ENCODE measurements at regions of chr11 and their contacts with region 1.

Region 1: GRCh38 chr11:61967116-61967923 is at the start of gene FTH1:
- DNase-seq: peak; percentile 78
- ATAC-seq: peak; percentile 59
- H3K4me3 ChIP-seq: peak within 1 kb of the TSS; percentile 92 to 99 (median 96)
- H3K27ac ChIP-seq: peak within 1 kb of the TSS; percentile 99
- H3K4me1 ChIP-seq: peaks cover 71% of the 10 kb centered on the region
- H3K27me3 ChIP-seq: no peaks in the 10 kb centered on the region; a peak in 1 of 5 replicates
- CTCF ChIP-seq: peak; percentile 6; the same call in 1 of the 2 replicates
- EP300 ChIP-seq: no peak; a peak in 1 of 4 replicates
- POLR2A ChIP-seq: peak; percentile 90 to 95
- RAD21 ChIP-seq: 0 out of 2 replicates have a peak, but pooled peaks have one; percentile 59
- total RNA-seq, gene FTH1: 544 and 607 TPM in 2 replicates

Region 2: DNA sequence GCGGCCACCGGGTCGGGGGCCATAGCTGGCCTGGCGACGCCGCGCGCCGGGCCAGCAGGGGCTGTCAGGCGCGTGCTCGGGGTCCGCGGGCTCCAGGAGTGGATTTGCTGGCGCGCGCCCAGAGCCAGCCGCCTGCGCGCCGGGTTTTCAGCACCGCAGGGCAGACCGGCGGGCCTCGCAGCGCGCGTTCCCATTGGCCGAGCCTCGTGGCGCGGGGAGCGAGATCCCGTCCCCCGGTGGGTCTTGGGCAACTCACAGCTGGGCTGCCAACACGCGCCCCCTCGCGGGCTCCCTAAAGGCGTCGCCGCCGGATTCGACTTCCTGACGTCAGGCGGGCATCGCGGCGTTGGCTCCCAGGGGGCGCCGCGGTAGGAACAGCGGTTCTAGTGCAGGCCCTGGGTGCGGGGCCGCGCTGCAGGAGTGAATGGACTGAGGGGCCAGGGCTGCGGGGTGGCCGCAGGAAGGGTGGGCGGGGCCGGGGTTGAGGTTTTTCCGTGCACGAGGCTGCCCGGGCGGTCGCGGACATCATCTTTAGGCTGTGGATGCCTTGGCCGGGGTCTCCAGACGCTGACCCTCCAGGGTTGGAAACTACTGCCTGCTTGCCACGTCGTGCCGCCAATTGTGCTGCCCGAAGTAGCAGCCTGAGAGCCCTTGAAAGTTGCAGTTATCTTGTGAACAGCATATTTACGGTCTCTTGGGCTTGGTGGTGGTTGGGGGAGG is 150.4 kb before region 1 on chr11 and contains the start of gene FADS1:
- CTCF ChIA-PET with region 1: no interaction called
- POLR2A ChIA-PET with region 1: interaction called, 24 read pairs
- in situ Hi-C with region 1: no loop called
- intact Hi-C with region 1: no loop called
- DNase-seq: peak; percentile 95
- ATAC-seq: peak; percentile 71
- H3K4me3 ChIP-seq: peak within 1 kb of the TSS; percentile 74 to 94 (median 81)
- H3K27ac ChIP-seq: peak within 1 kb of the TSS; percentile 99
- H3K4me1 ChIP-seq: peaks cover 52% of the 10 kb centered on the region
- H3K27me3 ChIP-seq: no peaks in the 10 kb centered on the region; a peak in 1 of 5 replicates
- CTCF ChIP-seq: peak; percentile 95
- EP300 ChIP-seq: 0 out of 4 replicates have a peak, but pooled peaks of 1 of the 2 experiments have one; percentile 10
- POLR2A ChIP-seq: no peak
- RAD21 ChIP-seq: peak; percentile 74; the same call in 1 of the 2 replicates
- total RNA-seq, gene FADS1: 65.8 and 108 TPM in 2 replicates

Region 3: GRCh38 chr11:61947486-61948210 is 19.7 kb before region 1 on chr11:
- CTCF ChIA-PET with region 1: no interaction called
- POLR2A ChIA-PET with region 1: interaction called, 138 read pairs
- in situ Hi-C with region 1: no loop called
- intact Hi-C with region 1: no loop called
- DNase-seq: peak; percentile 73
- ATAC-seq: peak; percentile 85
- H3K4me3 ChIP-seq: no peak overlapping the region
- H3K27ac ChIP-seq: no peak overlapping the region
- H3K4me1 ChIP-seq: peaks cover 21% of the 10 kb centered on the region; the same call in 1 of the 2 replicates
- H3K27me3 ChIP-seq: peaks cover 1 to 19% of the 10 kb centered on the region in 2 experiments; a peak in 3 of 5 replicates
- CTCF ChIP-seq: peak; percentile 97
- EP300 ChIP-seq: no peak
- POLR2A ChIP-seq: no peak
- RAD21 ChIP-seq: peak; percentile 99

Region 4: DNA sequence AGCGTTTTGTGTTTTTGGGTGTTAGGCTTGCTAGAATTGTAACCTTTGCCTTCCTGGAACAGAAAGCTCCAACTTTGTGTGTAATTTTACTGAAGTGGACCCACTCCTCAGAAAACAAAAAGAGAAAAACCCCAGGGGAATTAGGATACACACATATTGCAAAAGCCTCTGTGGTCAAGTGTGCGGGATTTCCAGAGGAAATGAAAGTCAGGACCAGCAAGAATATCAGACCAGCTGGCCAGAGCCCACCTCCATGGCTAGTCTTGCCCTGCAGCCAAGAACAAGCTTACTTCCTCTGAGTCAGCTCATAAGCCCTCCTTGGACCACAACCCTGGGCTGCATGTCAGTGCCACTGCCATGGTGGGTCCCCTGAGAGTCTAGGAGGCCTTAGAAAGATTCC is 37.2 kb after region 1 on chr11:
- CTCF ChIA-PET with region 1: no interaction called
- POLR2A ChIA-PET with region 1: interaction called, 518 read pairs
- in situ Hi-C with region 1: loop called (anchors 5 kb)
- intact Hi-C with region 1: no loop called
- DNase-seq: no peak
- ATAC-seq: no peak
- H3K4me3 ChIP-seq: no peak overlapping the region
- H3K27ac ChIP-seq: peak overlapping the region; percentile 26
- H3K4me1 ChIP-seq: peaks cover 67% of the 10 kb centered on the region
- H3K27me3 ChIP-seq: no peaks in the 10 kb centered on the region
- CTCF ChIP-seq: no peak
- EP300 ChIP-seq: no peak
- POLR2A ChIP-seq: no peak
- RAD21 ChIP-seq: no peak

Region 5: GRCh38 chr11:62025487-62026105 is 58.3 kb after region 1 on chr11:
- CTCF ChIA-PET with region 1: no interaction called
- POLR2A ChIA-PET with region 1: interaction called, 49 read pairs
- in situ Hi-C with region 1: no loop called
- intact Hi-C with region 1: no loop called
- DNase-seq: peak; percentile 87
- ATAC-seq: peak; percentile 88
- H3K4me3 ChIP-seq: peak overlapping the region; percentile 15 to 53 (median 38); a peak in 5 of 6 replicates
- H3K27ac ChIP-seq: peak overlapping the region; percentile 66
- H3K4me1 ChIP-seq: peaks cover 47% of the 10 kb centered on the region
- H3K27me3 ChIP-seq: no peaks in the 10 kb centered on the region
- CTCF ChIP-seq: no peak
- EP300 ChIP-seq: peak; percentile 60 to 67; a peak in 3 of 4 replicates
- POLR2A ChIP-seq: no peak
- RAD21 ChIP-seq: no peak

Region 6: GRCh38 chr11:62081378-62082291 is 114.3 kb after region 1 on chr11:
- CTCF ChIA-PET with region 1: no interaction called
- POLR2A ChIA-PET with region 1: interaction called, 18 read pairs
- in situ Hi-C with region 1: no loop called
- intact Hi-C with region 1: no loop called
- DNase-seq: peak; percentile 46
- ATAC-seq: peak; percentile 71
- H3K4me3 ChIP-seq: no peak overlapping the region; a peak in 1 of 6 replicates
- H3K27ac ChIP-seq: no peak overlapping the region
- H3K4me1 ChIP-seq: peaks cover 6% of the 10 kb centered on the region; the same call in 1 of the 2 replicates
- H3K27me3 ChIP-seq: no peaks in the 10 kb centered on the region
- CTCF ChIP-seq: peak; percentile 92
- EP300 ChIP-seq: no peak
- POLR2A ChIP-seq: no peak
- RAD21 ChIP-seq: peak; percentile 89